Heart left ventricle (tissue), 16 donors: ENCODE measurements at regions of chr9 and their contacts with region 1.

Region 1: GRCh38 chr9:38088006-38088925 is 19.2 kb upstream of the SHB start:
- DNase-seq: peak; percentile 75 to 87 (median 75)
- ATAC-seq: peak; percentile 71 to 85 (median 79)
- H3K4me3 ChIP-seq: no peak overlapping the region
- H3K27ac ChIP-seq: no peak overlapping the region
- H3K4me1 ChIP-seq: peaks cover 0 to 23% (median 6%) of the 10 kb centered on the region in 12 donors
- H3K27me3 ChIP-seq: no peaks in the 10 kb centered on the region
- CTCF ChIP-seq: peak; percentile 94 to 100 (median 97)
- POLR2A ChIP-seq: no peak

Region 2: DNA sequence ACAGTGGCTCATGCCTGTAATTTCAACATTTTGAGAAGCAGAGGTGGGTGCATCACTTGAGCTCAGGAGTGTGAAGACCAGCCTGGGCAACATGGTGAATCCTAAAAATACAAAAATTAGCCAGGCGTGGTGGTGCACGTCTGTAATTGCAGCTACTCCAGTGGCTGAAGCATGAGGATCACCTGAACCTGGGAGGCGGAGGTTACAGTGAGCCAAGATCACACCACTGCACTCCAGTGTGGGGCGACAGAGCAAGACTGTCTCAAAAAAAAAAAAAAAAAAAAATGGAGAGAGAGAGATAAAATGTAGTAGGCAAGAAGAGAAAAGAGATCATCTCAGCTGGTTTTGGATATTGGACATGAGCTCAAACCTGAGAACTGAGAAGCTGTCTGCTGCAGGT is 991.6 kb before region 1 on chr9:
- intact Hi-C with region 1: loop called in 1 of 10 experiments (anchors 10 kb)
- DNase-seq: no peak
- ATAC-seq: no peak
- H3K4me3 ChIP-seq: no peak overlapping the region
- H3K27ac ChIP-seq: no peak overlapping the region
- H3K4me1 ChIP-seq: no peaks in the 10 kb centered on the region
- H3K27me3 ChIP-seq: no peaks in the 10 kb centered on the region
- CTCF ChIP-seq: no peak
- POLR2A ChIP-seq: no peak

Region 3: GRCh38 chr9:38154501-38155421 is 66.5 kb after region 1 on chr9:
- intact Hi-C with region 1: loop called in 3 of 10 experiments (anchors 2 to 10 kb)
- DNase-seq: no peak
- ATAC-seq: peak in 2 of 4 donors; percentile 13 to 33
- H3K4me3 ChIP-seq: no peak overlapping the region
- H3K27ac ChIP-seq: no peak overlapping the region
- H3K4me1 ChIP-seq: no peaks in the 10 kb centered on the region
- H3K27me3 ChIP-seq: no peaks in the 10 kb centered on the region
- CTCF ChIP-seq: no peak
- POLR2A ChIP-seq: no peak

Region 4: DNA sequence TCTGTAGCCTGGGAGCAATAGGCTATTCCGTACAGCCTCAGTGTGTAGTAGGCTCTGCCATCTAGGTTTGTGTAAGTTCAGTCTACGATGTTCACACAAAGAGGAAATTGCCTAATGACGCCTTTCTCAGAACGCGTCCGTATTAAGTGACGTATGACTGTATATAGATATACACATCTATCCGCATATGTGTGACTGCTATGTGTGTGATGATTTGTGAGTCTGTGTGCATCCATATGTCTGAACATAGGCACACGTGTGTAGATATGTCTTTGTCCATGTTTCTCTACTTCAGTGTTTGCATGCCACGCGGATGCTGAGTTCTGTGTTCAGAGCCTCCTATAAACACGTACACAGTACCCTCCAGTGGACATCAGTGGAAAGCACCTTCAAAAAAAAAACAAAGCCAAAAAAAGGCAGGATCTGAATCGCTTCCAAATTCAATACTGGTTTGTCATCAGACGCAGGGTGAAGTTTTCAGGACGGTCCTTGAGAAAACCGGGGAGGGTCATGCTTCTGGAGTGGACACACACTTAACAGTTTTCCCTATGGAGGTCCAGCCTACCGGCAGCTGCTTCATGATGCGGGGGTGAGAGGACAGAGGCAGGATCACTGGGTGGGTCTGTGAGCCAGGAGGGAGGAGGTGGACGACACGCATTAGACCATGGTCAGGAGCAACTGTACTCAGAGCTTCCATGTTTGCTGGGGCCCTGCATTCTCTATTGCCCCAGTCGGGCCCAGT is 274.8 kb after region 1 on chr9:
- intact Hi-C with region 1: loop called in 8 of 10 experiments (anchors 5 to 10 kb)
- DNase-seq: peak in 3 of 5 donors; percentile 20 to 44 (median 26)
- ATAC-seq: peak; percentile 73 to 90 (median 81)
- H3K4me3 ChIP-seq: peak overlapping the region in 1 of 12 donors; percentile 32
- H3K27ac ChIP-seq: no peak overlapping the region
- H3K4me1 ChIP-seq: peaks cover 0 to 9% (median 0%) of the 10 kb centered on the region in 12 donors
- H3K27me3 ChIP-seq: no peaks in the 10 kb centered on the region
- CTCF ChIP-seq: peak; percentile 36 to 72 (median 66)
- POLR2A ChIP-seq: no peak

Region 5: DNA sequence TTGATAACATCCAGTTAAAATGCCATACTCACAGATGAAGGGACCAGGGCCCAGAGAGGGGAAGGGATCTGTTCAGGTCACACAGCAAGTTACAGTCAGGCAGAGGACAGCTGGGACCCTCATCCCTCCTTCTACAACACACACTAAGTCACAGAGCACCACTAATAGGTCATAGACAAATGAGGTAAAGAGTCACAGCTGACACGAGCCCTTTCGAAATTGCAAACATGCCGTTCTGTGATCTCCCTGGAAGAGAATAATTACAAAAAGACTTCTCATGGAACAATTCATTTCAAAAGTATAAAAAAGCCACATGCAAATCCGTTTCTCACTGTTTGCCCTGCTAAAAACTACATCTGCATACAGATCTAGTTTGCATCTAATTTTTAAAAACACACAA is 320.5 kb after region 1 on chr9:
- intact Hi-C with region 1: loop called in 1 of 10 experiments (anchors 10 kb)
- DNase-seq: no peak
- ATAC-seq: no peak
- H3K4me3 ChIP-seq: no peak overlapping the region
- H3K27ac ChIP-seq: no peak overlapping the region
- H3K4me1 ChIP-seq: no peaks in the 10 kb centered on the region
- H3K27me3 ChIP-seq: peaks cover 0 to 51% (median 10%) of the 10 kb centered on the region in 9 donors
- CTCF ChIP-seq: no peak
- POLR2A ChIP-seq: no peak